ENCODE measurements at regions of chr15 and their contacts with region 1.

Region 1: GRCh38 chr15:82197733-82198594 is 64.6 kb downstream of the EFL1 start:
- DNase-seq: no peak
- H3K4me3 ChIP-seq: no peak overlapping the region
- H3K27ac ChIP-seq: no peak overlapping the region
- H3K4me1 ChIP-seq: peaks cover 4 to 9% (median 6%) of the 10 kb centered on the region in 4 donors
- H3K27me3 ChIP-seq: no peaks in the 10 kb centered on the region
- CTCF ChIP-seq: peak; percentile 70 to 79 (median 76)
- EP300 ChIP-seq: no peak
- POLR2A ChIP-seq: no peak

Region 2: GRCh38 chr15:81480645-81481053 is 717.3 kb before region 1 on chr15:
- intact Hi-C with region 1: loop called (anchors 5 kb)
- DNase-seq: no peak
- H3K4me3 ChIP-seq: no peak overlapping the region
- H3K27ac ChIP-seq: no peak overlapping the region
- H3K4me1 ChIP-seq: peaks cover 0 to 4% (median 1%) of the 10 kb centered on the region in 4 donors
- H3K27me3 ChIP-seq: no peaks in the 10 kb centered on the region
- CTCF ChIP-seq: peak; percentile 82 to 93 (median 86)
- EP300 ChIP-seq: no peak
- POLR2A ChIP-seq: no peak

Region 3: GRCh38 chr15:82108489-82109078 is 89.4 kb before region 1 on chr15:
- intact Hi-C with region 1: loop called (anchors 5 kb)
- DNase-seq: no peak
- H3K4me3 ChIP-seq: no peak overlapping the region
- H3K27ac ChIP-seq: no peak overlapping the region
- H3K4me1 ChIP-seq: no peaks in the 10 kb centered on the region
- H3K27me3 ChIP-seq: no peaks in the 10 kb centered on the region
- CTCF ChIP-seq: peak; percentile 69 to 95 (median 84)
- EP300 ChIP-seq: no peak
- POLR2A ChIP-seq: no peak